Activated naive CD4-positive, alpha-beta T cell treated with anti-CD3 and anti-CD28 coated beads, Interleukin-2, amount 10 ng/mL, durations not matched to agents 7 days and 5 days (primary cell): ENCODE measurements at regions of chr12 and their contacts with region 1.

Region 1: GRCh38 chr12:51970904-51971646 is 19.6 kb downstream of the ACVR1B start:
- DNase-seq: peak; percentile 43
- H3K4me3 Mint-ChIP-seq: peak overlapping the region; percentile 25
- H3K27ac Mint-ChIP-seq: peak overlapping the region; percentile 84
- H3K4me1 Mint-ChIP-seq: peaks cover 62% of the 10 kb centered on the region
- H3K27me3 Mint-ChIP-seq: peaks cover 3% of the 10 kb centered on the region

Region 2: GRCh38 chr12:51705450-51705849 is 265.6 kb before region 1 on chr12:
- CTCF ChIA-PET with region 1: no interaction called
- DNase-seq: no peak
- H3K4me3 Mint-ChIP-seq: no peak overlapping the region
- H3K27ac Mint-ChIP-seq: no peak overlapping the region
- H3K4me1 Mint-ChIP-seq: no peaks in the 10 kb centered on the region
- H3K27me3 Mint-ChIP-seq: peaks cover 4% of the 10 kb centered on the region

Region 3: GRCh38 chr12:51994959-51995358 is 23.9 kb after region 1 on chr12:
- CTCF ChIA-PET with region 1: interaction called, 12 read pairs
- DNase-seq: no peak
- H3K4me3 Mint-ChIP-seq: no peak overlapping the region
- H3K27ac Mint-ChIP-seq: no peak overlapping the region
- H3K4me1 Mint-ChIP-seq: peaks cover 3% of the 10 kb centered on the region
- H3K27me3 Mint-ChIP-seq: no peaks in the 10 kb centered on the region